ENCODE measurements at regions of chr2 and their contacts with region 1.

Region 1: DNA sequence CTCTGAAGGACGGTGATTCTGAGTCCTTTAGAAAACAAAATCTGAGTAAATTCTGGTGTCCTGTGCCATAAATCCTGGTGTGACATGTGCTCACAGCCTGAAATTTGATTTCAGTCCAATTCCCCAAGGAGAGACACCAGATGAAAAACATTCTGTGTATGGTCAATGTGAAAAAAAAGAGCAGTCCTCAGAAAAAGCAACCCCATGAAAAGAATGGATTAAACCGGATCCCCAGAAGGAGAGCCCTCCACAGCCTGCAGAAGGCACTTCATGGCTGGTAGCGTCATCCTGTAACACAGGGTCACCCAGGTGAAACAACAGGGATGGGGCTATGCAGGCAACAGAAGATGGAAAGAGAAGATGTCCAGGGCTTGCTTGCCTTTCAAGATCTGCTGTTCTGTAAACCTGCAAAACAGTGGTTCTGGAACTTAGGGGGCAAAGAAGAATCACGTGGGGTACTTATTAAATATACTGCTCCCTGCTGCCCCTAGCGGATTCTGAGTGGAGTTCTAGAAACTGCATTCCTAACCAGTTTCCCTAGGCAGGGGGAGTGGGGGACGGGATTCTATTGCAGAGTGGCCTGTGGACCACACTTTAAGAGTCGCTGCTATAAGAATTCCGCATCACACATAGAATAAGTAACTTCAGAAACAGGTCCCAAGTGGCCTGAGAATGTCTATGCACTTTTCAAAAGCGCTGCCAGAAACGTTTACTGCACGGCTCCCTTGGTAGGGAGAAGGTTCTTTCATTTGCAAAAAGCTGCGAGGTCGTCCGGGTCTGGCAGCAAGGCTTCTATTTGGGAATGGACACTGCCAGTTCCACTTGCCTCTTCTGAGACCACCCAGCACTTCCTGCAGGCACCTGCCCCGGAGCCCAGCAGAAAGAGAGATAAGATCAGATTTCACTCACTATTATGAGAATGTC is 118.9 kb upstream of the ARL5A start:
- DNase-seq: peak in 1 of 2 experiments; percentile 77
- H3K4me3 ChIP-seq: peak overlapping the region in 2 of 4 experiments; percentile 15 to 49; a peak in 4 of 8 replicates
- H3K27ac ChIP-seq: no peak overlapping the region
- H3K4me1 ChIP-seq: peaks cover 2 to 5% (median 3%) of the 10 kb centered on the region in 4 experiments; a peak in 4 of 7 replicates
- H3K27me3 ChIP-seq: no peaks in the 10 kb centered on the region
- CTCF ChIP-seq: peak; percentile 22 to 73 (median 72)
- EP300 ChIP-seq: no peak
- POLR2A ChIP-seq: no peak
- RAD21 ChIP-seq: peak; percentile 37 to 48; a peak in 3 of 4 replicates

Region 2: DNA sequence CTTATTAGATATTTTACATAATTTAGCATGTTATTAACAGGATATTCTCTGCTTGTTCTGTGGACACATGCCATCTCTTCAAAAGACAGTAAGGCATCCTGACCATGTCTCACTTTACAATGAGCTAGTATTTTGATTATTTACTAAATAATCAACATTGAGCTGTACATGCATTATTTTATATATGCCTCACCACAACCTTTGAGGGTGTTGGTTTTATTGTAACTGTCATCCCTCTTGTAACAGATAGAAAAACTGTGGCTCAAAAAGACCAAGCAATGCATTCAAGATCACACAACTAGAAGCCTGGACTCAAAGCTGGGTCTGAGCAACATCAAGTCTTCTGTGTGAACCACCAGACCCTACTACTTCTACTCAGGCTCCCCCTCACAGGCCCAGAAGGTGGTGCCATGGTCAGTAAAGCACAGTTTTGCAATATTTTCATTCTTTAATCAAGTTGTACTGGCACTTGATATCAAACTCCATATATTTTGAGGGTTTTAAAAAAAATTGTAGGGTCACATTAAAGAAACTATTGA is 13.8 kb before region 1 on chr2:
- CTCF ChIA-PET with region 1: interaction called, 15 read pairs
- POLR2A ChIA-PET with region 1: no interaction called
- DNase-seq: no peak
- H3K4me3 ChIP-seq: no peak overlapping the region
- H3K27ac ChIP-seq: no peak overlapping the region
- H3K4me1 ChIP-seq: peaks cover 0 to 2% (median 0%) of the 10 kb centered on the region in 4 experiments; a peak in 2 of 7 replicates
- H3K27me3 ChIP-seq: no peaks in the 10 kb centered on the region
- CTCF ChIP-seq: no peak
- EP300 ChIP-seq: no peak
- POLR2A ChIP-seq: no peak
- RAD21 ChIP-seq: no peak

Region 3: GRCh38 chr2:151961558-151961957 is 14.4 kb after region 1 on chr2:
- CTCF ChIA-PET with region 1: interaction called, 10 read pairs
- POLR2A ChIA-PET with region 1: no interaction called
- DNase-seq: no peak
- H3K4me3 ChIP-seq: no peak overlapping the region
- H3K27ac ChIP-seq: no peak overlapping the region
- H3K4me1 ChIP-seq: no peaks in the 10 kb centered on the region
- H3K27me3 ChIP-seq: no peaks in the 10 kb centered on the region
- CTCF ChIP-seq: no peak
- EP300 ChIP-seq: no peak
- POLR2A ChIP-seq: no peak
- RAD21 ChIP-seq: no peak

Measured in H1 (cell line).